Activated CD4-positive, alpha-beta T cell treated with anti-CD3 and anti-CD28 coated beads, Interleukin-2, amount 10 ng/mL, durations not matched to agents 7 days and 5 days (primary cell): ENCODE measurements at regions of chr2 and their contacts with region 1.

Region 1: GRCh38 chr2:156400706-156401678 is 35.2 kb upstream of the GPD2 start:
- DNase-seq: peak; percentile 76
- H3K4me3 Mint-ChIP-seq: peak overlapping the region; percentile 82
- H3K27ac Mint-ChIP-seq: peak overlapping the region; percentile 91
- H3K4me1 Mint-ChIP-seq: peaks cover 36% of the 10 kb centered on the region
- H3K27me3 Mint-ChIP-seq: peaks cover 5% of the 10 kb centered on the region

Region 2: GRCh38 chr2:156341452-156342253 is 59.3 kb before region 1 on chr2:
- CTCF ChIA-PET with region 1: interaction called, 3 read pairs
- POLR2A ChIA-PET with region 1: interaction called, 10 read pairs
- DNase-seq: peak; percentile 91
- H3K4me3 Mint-ChIP-seq: peak overlapping the region; percentile 95
- H3K27ac Mint-ChIP-seq: peak overlapping the region; percentile 99
- H3K4me1 Mint-ChIP-seq: peaks cover 47% of the 10 kb centered on the region
- H3K27me3 Mint-ChIP-seq: no peaks in the 10 kb centered on the region

Region 3: GRCh38 chr2:156423674-156424282 is 22.8 kb after region 1 on chr2:
- CTCF ChIA-PET with region 1: no interaction called
- POLR2A ChIA-PET with region 1: no interaction called
- DNase-seq: no peak
- H3K4me3 Mint-ChIP-seq: no peak overlapping the region
- H3K27ac Mint-ChIP-seq: no peak overlapping the region
- H3K4me1 Mint-ChIP-seq: no peaks in the 10 kb centered on the region
- H3K27me3 Mint-ChIP-seq: peaks cover 18% of the 10 kb centered on the region